Endothelial cell of umbilical vein (primary cell): ENCODE measurements at regions of chr2 and their contacts with region 1.

Region 1: DNA sequence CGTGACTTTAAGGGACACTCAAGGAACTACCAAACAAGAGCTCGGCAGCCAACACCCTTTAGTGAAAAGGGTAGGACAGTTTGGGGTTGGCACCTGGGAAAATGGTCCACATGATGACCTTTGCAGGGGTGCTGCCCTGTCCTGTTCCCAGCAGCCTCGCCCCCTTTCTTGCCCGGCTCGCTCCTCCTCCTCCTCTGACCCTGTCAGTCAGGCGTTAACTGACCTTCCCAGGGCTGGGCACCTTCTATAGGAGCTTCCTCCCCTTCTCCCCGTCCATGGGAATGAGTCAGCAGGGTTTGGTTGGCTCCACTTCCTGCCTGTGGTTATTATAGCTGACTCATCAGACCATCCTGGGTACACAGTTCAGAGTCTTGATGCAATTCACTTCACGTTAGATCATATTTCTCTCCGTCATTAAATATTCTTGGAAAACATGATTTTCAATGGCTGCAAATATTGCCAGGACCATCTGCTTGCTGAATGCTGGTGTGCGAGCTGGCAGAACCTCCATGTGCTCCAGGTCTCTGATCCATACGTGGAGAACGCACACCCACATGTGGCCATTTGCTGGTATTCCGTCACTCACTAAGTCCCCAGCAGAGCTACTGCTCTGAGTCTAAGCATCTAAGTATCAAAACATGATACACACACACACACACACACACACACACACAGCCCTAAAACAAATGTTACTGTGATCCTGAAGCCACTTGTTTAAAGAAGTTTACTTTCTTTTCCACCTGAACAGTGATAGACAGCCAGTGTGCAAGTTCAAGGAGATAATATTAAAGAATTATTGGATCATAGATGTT is 185.0 kb downstream of the ANAPC1 start:
- DNase-seq: peak; percentile 95
- H3K4me3 ChIP-seq: no peak overlapping the region
- H3K27ac ChIP-seq: peak overlapping the region; percentile 76
- H3K4me1 ChIP-seq: peaks cover 39% of the 10 kb centered on the region
- H3K27me3 ChIP-seq: no peaks in the 10 kb centered on the region
- CTCF ChIP-seq: peak; percentile 46 to 57
- POLR2A ChIP-seq: no peak

Region 2: DNA sequence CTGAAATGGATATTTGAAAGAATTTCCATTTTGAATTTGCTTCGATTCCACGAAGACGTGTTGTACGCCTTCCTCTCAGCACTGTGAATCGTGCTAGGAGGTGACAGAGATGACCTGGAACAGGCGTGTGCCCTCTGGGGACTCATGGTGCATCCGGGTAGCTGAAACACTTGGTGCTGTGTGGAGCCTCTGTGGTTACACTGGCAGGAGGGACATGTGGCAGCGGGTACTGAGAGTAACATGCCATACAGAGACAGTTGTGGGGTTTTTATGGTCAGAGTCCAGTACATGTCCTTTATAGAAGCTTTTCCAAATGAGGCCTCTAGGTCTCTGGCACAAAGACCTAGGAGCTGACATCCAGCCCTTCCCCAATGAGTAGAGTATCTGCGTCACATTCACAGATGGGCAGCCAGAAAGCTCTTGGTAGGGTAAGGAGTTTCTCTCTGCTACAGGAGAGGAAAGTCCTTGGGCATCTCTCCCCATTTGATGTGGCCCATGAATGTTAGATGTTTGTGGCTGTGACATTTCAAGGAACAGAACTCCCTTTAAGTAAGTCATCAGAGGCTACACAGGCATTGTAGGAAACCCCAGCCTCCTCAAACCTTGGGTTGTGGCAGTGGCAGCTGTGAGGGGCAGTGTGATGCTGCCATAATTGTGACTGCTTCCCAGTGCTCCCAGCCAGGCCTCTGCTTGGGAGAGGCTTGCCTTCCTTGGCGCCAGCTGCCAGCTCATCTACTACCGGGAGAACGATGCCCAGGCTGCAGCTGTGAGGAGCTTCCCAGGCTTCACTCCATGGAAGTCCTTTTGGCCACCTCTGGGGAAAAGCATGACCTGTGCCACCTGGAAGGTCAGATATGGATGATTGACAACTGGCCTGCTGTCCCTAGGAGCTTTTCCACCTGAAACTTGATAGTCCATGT is 886.0 kb before region 1 on chr2:
- CTCF ChIA-PET with region 1: interaction called, 20 read pairs
- POLR2A ChIA-PET with region 1: no interaction called
- dilution Hi-C with region 1: no loop called
- intact Hi-C with region 1: loop called (anchors 2 kb)
- DNase-seq: no peak
- H3K4me3 ChIP-seq: no peak overlapping the region
- H3K27ac ChIP-seq: no peak overlapping the region
- H3K4me1 ChIP-seq: no peaks in the 10 kb centered on the region
- H3K27me3 ChIP-seq: peaks cover 3 to 13% of the 10 kb centered on the region in 2 experiments
- CTCF ChIP-seq: no peak
- POLR2A ChIP-seq: no peak

Region 3: GRCh38 chr2:111071600-111072171 is 627.3 kb before region 1 on chr2:
- CTCF ChIA-PET with region 1: no interaction called
- POLR2A ChIA-PET with region 1: no interaction called
- dilution Hi-C with region 1: no loop called
- intact Hi-C with region 1: loop called (anchors 5 kb)
- DNase-seq: peak; percentile 99
- H3K4me3 ChIP-seq: peak overlapping the region in 1 of 3 experiments; percentile 15
- H3K27ac ChIP-seq: peak overlapping the region; percentile 95
- H3K4me1 ChIP-seq: peaks cover 22% of the 10 kb centered on the region
- H3K27me3 ChIP-seq: no peaks in the 10 kb centered on the region
- CTCF ChIP-seq: no peak
- POLR2A ChIP-seq: no peak

Region 4: GRCh38 chr2:111667542-111668273 is 31.2 kb before region 1 on chr2:
- CTCF ChIA-PET with region 1: interaction called, 8 read pairs
- POLR2A ChIA-PET with region 1: no interaction called
- dilution Hi-C with region 1: no loop called
- intact Hi-C with region 1: loop called (anchors 1 kb)
- DNase-seq: peak; percentile 73
- H3K4me3 ChIP-seq: no peak overlapping the region
- H3K27ac ChIP-seq: no peak overlapping the region
- H3K4me1 ChIP-seq: peaks cover 3% of the 10 kb centered on the region
- H3K27me3 ChIP-seq: no peaks in the 10 kb centered on the region
- CTCF ChIP-seq: peak; percentile 37 to 58
- POLR2A ChIP-seq: no peak